Left cardiac atrium (tissue), 4 donors: ENCODE measurements at regions of chr4 and their contacts with region 1.

Region 1: DNA sequence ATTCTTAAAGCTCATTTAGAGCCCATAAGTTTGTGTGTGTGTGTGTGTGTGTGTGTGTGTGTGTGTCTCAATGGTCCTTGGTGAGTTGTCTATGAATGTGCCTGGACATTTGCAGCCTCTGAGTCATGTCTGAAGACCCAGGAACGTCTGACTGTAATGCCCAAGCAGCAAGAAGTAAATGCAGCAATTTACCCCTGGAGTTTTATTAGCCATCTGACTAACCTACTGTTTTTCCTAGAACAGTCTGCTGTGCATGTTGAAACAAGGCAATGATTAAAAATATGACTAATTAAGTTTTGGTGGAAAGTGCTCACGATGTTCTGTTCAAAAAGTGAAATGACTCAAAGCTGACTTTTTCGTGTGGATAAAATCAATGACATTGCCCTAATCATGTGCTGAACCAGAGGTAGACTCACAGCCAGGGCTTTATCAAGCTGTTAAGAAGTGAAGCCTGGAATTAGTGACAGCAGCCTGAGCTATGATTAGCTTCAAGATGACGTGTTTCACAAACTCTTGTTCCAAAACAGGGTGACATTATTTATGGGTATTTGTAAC is 201.6 kb downstream of the CPE start:
- DNase-seq: peak; percentile 26
- ATAC-seq: peak; percentile 81 to 95

Region 2: DNA sequence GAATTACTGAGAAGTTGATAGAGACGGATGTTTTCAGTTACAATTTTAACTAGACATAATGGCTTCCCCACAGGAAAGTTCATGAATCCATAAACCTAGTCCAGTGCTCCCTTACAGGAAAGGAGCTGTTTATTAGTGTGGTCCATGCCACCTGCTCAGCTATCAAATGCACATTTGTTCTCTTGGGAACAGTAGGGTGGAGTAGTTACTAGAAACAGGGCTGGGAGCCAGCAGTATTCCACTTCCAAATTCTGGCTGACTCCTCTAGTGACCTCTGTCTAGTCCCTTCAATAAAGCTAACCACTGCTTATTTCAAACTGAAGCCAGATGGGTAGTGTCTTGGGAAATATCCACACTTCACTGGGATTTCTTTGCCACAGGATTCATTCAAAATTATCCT is 204.2 kb after region 1 on chr4:
- intact Hi-C with region 1: loop called in 1 of 2 experiments (anchors 5 kb)
- DNase-seq: peak; percentile 56
- ATAC-seq: peak; percentile 89 to 90